ENCODE measurements at regions of chr6 and their contacts with region 1.

Region 1: GRCh38 chr6:157021344-157021992 is 244.3 kb downstream of the ARID1B start:
- DNase-seq: peak; percentile 93 to 96 (median 93)
- ATAC-seq: peak; percentile 89 to 95 (median 94)
- H3K4me3 ChIP-seq: peak overlapping the region; percentile 53 to 96 (median 82)
- H3K27ac ChIP-seq: peak overlapping the region; percentile 95 to 100 (median 99)
- H3K4me1 ChIP-seq: peaks cover 0 to 55% (median 32%) of the 10 kb centered on the region in 12 donors
- H3K27me3 ChIP-seq: no peaks in the 10 kb centered on the region
- CTCF ChIP-seq: peak; percentile 11 to 72 (median 48)
- POLR2A ChIP-seq: peak in 1 of 2 donors; percentile 95

Region 2: GRCh38 chr6:156876302-156876701 is 145.2 kb before region 1 on chr6:
- intact Hi-C with region 1: loop called in 4 of 10 experiments (anchors 5 to 10 kb)
- DNase-seq: peak in 3 of 5 donors; percentile 41 to 50 (median 44)
- ATAC-seq: peak in 3 of 4 donors; percentile 56 to 68 (median 62)
- H3K4me3 ChIP-seq: no peak overlapping the region
- H3K27ac ChIP-seq: no peak overlapping the region
- H3K4me1 ChIP-seq: peaks cover 0 to 68% (median 52%) of the 10 kb centered on the region in 12 donors
- H3K27me3 ChIP-seq: no peaks in the 10 kb centered on the region
- CTCF ChIP-seq: peak in 11 of 12 donors; percentile 8 to 46 (median 26)
- POLR2A ChIP-seq: no peak

Region 3: DNA sequence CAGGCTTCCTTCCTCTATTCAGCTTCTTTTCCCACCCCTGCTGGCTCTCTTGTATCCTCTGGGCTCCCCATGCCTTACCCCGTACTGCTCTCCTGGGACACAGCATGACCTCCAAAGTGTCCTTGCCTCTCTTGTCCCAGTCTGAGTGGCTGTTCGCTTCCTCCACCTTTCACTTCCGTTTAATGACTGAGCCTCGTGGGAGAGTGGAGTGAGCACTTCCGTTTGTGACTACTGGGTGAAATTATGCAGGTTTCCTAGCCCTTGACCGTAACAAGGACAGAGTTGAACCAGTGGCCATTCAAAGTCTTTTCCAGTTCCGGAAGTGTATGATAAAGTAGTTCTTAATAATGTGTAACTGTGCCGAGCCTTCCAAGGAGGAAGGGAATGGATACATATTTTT is 135.1 kb before region 1 on chr6:
- intact Hi-C with region 1: loop called in 2 of 10 experiments (anchors 5 to 10 kb)
- DNase-seq: peak in 3 of 5 donors; percentile 42 to 54 (median 45)
- ATAC-seq: peak; percentile 29 to 72 (median 66)
- H3K4me3 ChIP-seq: no peak overlapping the region
- H3K27ac ChIP-seq: peak overlapping the region in 11 of 12 donors; percentile 6 to 54 (median 30)
- H3K4me1 ChIP-seq: peaks cover 8 to 93% (median 75%) of the 10 kb centered on the region in 12 donors
- H3K27me3 ChIP-seq: no peaks in the 10 kb centered on the region
- CTCF ChIP-seq: no peak
- POLR2A ChIP-seq: no peak

Region 4: DNA sequence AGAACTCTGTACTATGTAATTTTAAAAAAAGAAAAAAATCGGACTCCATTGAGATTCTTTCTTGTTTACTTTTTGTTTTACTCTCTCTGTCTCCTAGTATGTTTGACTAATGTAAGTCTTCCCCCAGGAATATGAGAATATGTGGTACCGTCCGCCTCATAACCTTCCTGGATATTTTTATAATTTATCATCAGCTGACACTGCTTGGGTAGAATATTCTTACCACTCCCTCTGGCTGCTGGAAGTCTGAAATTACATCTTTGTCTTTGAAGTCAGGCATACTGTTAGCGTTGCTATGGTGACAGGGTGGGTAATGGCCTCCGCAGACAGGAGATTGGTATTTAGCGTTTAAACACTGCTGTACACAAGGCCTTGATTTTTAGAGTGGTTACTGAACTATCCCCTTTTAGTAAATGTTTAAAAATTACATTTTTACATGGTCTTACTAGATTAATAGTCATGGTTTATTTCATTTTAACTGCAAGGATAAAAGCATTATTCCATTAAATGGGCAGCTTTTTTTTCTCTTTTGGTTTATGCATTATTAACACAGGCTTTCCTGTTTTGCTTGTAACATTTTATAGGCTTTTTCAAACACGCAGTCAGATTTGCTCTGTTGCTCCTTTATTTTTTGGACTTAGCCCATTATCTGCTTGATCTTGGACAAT is 67.9 kb before region 1 on chr6:
- intact Hi-C with region 1: loop called in 3 of 10 experiments (anchors 5 to 10 kb)
- DNase-seq: peak in 2 of 5 donors; percentile 47 to 62
- ATAC-seq: peak; percentile 57 to 80 (median 71)
- H3K4me3 ChIP-seq: peak overlapping the region in 7 of 12 donors; percentile 6 to 39 (median 29)
- H3K27ac ChIP-seq: peak overlapping the region in 11 of 12 donors; percentile 27 to 76 (median 53)
- H3K4me1 ChIP-seq: peaks cover 13 to 88% (median 66%) of the 10 kb centered on the region in 12 donors
- H3K27me3 ChIP-seq: no peaks in the 10 kb centered on the region
- CTCF ChIP-seq: peak in 10 of 12 donors; percentile 24 to 66 (median 50)
- POLR2A ChIP-seq: no peak

Region 5: DNA sequence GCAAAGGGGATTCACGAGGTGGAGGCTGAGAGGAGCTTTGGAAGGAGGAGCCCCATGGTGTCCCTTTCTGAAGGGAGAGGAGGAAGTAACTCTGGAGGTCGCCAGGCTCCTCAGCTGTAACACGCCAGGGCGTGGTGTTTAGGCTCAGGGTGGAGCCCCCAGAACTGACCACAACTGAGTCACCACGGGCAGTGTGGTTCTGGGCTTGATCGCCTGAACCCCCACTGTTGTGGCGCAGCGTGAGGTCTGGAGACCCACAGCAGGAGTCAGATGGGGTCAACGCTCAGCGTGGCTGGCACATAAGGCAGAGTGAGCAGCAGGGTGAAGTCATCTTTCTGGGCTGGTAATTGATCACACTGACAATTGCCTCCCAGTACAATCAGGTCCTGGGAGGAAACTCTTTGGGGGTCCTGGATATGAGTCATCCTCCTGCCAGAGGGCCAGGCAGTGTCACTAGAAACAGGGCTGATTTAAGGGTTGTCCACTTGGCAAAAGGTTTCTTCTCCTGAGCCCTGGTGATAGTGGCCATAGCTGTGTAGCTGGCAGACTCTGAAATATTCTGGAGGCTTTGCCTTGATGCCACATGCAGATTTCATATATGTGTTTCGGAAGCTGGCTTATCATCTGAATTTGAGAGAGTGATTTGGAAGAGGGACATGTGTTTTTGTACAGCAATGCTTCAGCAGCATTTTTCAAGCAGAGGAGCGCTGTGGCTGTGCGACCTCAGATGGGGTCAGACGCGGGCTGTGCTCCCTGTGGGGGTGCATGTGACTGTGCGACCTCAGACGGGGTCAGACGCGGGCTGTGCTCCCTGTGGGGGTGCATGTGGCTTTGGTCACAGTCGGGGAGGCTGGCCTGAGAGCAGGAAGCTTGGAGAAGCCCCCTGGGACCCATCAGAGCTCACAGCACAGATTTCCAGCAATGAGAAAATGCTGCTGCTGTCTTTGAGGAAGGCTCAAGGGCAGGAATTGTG is 1010.2 kb after region 1 on chr6:
- intact Hi-C with region 1: no loop called
- DNase-seq: peak; percentile 78 to 88 (median 87)
- ATAC-seq: peak; percentile 70 to 89 (median 77)
- H3K4me3 ChIP-seq: no peak overlapping the region
- H3K27ac ChIP-seq: peak overlapping the region; percentile 11 to 86 (median 68)
- H3K4me1 ChIP-seq: peaks cover 8 to 69% (median 47%) of the 10 kb centered on the region in 12 donors
- H3K27me3 ChIP-seq: no peaks in the 10 kb centered on the region
- CTCF ChIP-seq: no peak
- POLR2A ChIP-seq: no peak

Measured in heart left ventricle (tissue), 16 donors.